PC-9 (cell line): ENCODE measurements at regions of chr6 and their contacts with region 1.

Region 1: DNA sequence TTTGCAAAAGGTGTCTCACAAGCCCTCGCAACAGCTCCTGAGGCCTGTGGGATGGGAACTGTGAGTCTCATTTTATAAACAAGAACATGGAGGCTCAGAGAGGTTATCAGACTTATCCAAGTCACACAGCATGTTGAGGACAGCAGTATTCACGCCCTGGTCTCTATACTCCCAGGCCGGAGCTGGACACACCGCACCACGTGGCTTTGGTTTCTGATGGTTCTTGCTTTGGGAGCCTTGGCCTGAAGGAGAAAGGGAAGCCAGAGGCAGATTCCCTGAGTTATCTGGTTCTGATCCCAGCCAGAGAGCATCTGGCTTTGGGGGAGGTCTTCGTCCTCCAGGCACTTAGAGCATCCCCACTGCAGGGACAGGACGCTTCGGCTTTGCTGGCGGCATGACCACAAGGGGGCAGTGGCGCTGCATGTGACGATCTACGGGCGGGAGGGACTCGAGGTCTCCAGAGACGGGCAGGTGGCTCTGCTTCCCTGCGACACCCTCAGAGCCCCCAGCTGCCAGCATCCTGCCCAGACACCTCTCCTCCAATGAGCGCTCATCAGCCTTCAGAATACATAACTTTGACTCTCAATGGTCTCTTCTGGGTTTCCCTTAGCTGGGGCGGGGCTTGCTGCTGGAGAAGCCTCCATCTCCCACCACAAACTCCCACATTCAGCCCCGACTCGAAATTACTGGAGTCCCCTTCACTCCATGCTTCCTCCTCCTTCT is 51.4 kb upstream of the SAYSD1 start:
- DNase-seq: peak; percentile 64 to 80
- H3K4me3 ChIP-seq: no peak overlapping the region
- H3K27ac ChIP-seq: no peak overlapping the region
- H3K4me1 ChIP-seq: peaks cover 32% of the 10 kb centered on the region
- H3K27me3 ChIP-seq: no peaks in the 10 kb centered on the region
- CTCF ChIP-seq: peak; percentile 93

Region 2: DNA sequence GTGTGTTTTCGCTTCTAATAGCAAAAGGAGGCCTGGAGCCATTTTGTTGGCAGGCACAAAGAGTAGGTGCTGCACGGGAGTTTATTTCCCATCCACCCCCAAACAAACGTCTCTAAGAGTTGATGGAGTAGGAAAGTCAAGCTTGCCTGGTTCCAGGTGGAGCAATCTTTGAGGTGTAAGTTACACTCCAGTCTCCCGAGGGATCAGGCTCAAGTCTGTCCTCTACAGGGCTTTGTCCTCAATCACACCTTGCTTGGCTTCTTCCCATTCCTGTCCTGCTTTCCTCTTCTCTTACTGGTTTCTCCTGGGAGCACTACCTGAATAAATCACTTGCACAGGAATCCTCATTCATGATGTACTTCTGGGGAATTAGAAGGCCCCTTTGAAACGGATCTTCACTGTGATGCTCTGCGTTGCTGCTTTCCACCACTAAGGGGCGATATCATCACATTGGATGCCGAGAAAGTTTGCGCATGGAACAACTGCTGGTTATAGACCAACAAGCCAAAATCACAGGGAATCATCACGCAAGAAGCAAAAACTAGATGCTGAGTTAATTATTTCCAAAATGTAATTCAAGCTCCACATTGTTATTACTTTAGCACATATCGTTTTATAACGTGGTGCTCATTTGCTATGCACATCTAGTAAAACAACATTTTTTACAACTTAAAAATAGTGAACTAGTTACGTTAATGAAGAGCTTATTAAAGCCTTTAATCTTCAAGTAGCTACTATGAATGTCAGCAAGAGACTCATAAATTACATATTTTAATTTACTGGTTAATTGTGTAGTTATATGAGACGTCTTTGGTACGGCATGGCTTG is 294.4 kb before region 1 on chr6:
- CTCF ChIA-PET with region 1: no interaction called
- POLR2A ChIA-PET with region 1: no interaction called
- intact Hi-C with region 1: loop called (anchors 5 kb)
- DNase-seq: peak in 1 of 2 experiments; percentile 45
- H3K4me3 ChIP-seq: no peak overlapping the region
- H3K27ac ChIP-seq: no peak overlapping the region
- H3K4me1 ChIP-seq: no peaks in the 10 kb centered on the region
- H3K27me3 ChIP-seq: no peaks in the 10 kb centered on the region
- CTCF ChIP-seq: peak; percentile 87

Region 3: DNA sequence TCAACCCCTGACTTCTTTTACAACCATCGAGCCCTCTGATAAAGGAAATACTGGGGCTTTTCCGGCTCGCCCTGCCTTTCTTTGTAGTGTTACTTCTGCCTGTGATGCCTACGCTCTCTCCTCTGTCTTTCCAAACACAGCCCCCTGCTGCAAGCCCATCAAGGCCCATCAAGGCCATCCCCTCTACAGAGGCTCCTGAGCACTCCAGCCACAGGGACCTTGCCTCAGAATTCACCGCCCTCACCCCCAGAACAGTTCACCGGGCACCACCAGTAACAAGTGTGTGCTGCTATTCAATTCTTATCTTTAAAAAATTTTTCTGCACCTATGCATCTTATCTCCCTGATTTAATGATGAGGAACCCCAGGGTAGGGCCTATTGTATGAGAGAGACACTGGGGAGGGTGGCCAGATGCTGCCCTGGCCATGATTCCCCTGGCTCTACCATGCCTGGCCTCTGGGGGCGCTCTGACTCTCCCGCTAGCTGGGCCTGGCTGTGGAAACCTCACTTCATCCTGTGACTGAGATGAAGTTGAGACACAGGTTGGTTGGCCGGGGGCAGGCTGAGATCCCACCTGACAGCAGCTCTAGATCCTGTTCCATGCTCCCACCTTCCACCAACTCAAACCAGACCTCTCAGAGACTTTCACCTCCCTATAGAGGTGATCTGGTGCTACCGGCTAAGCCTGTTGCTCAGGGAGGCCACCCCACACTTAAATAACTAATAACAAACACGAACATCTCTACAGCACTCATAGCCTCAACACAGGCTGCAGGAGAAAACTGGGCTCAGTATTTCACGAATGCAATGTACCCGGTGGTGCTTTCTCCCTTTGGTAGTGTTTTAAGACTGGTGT is 137.0 kb before region 1 on chr6:
- CTCF ChIA-PET with region 1: no interaction called
- POLR2A ChIA-PET with region 1: no interaction called
- intact Hi-C with region 1: loop called (anchors 1 kb)
- DNase-seq: peak in 1 of 2 experiments; percentile 26
- H3K4me3 ChIP-seq: no peak overlapping the region
- H3K27ac ChIP-seq: no peak overlapping the region
- H3K4me1 ChIP-seq: no peaks in the 10 kb centered on the region
- H3K27me3 ChIP-seq: peaks cover 85% of the 10 kb centered on the region
- CTCF ChIP-seq: peak; percentile 84

Region 4: GRCh38 chr6:39203852-39204375 is 37.6 kb after region 1 on chr6:
- CTCF ChIA-PET with region 1: interaction called, 3 read pairs
- POLR2A ChIA-PET with region 1: interaction called, 4 read pairs
- intact Hi-C with region 1: loop called (anchors 1 kb)
- DNase-seq: peak; percentile 97 to 98
- H3K4me3 ChIP-seq: peak overlapping the region; percentile 16; the same call in 1 of the 2 replicates
- H3K27ac ChIP-seq: peak overlapping the region; percentile 95
- H3K4me1 ChIP-seq: peaks cover 96% of the 10 kb centered on the region
- H3K27me3 ChIP-seq: no peaks in the 10 kb centered on the region
- CTCF ChIP-seq: no peak

Region 5: GRCh38 chr6:39228992-39229767 is 62.8 kb after region 1 on chr6 and contains the start of gene KCNK5:
- CTCF ChIA-PET with region 1: no interaction called
- POLR2A ChIA-PET with region 1: no interaction called
- intact Hi-C with region 1: loop called (anchors 1 kb)
- DNase-seq: peak; percentile 73 to 89
- H3K4me3 ChIP-seq: peak within 1 kb of the TSS; percentile 96
- H3K27ac ChIP-seq: peak within 1 kb of the TSS; percentile 34; the same call in 1 of the 2 replicates
- H3K4me1 ChIP-seq: peaks cover 39% of the 10 kb centered on the region
- H3K27me3 ChIP-seq: no peaks in the 10 kb centered on the region
- CTCF ChIP-seq: peak; percentile 86
- total RNA-seq, gene KCNK5: 11.9 and 14.3 TPM in 2 replicates

Region 6: DNA sequence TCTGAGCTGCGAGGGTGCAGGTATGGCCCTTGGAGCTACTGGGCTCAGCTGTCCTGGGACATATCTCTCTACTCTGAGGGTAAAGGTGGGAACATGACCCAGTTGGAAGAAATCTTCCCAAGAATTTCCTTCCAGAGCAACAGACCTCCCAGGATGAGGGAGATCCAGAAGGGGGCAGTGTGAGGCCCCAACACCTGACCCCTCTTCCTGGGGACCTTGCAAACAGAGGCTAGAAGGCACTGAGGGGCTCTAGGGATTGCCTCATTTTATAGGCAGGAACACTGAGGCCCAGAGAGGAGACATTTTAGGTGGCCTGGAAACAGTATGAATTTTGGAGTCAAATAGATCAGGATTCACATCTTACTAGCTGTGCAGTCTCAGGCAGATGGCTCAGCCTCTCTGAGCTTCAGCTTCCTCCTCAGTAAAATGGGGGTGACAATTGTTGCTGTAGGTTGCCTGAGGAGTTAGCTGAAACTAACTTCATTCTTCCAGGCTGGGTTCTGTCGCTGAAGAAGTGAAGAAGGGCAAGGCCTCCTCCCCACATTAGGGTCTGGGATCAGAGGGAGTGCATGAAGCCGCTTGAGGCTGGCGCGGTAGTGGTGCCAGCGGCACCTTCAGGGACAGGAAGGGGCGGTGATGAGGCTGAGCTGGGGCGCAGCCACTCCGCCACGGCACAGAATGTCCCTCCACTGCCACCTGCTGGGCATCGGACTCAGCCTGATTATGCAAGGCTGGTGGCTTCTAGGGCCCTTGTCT is 136.5 kb after region 1 on chr6:
- CTCF ChIA-PET with region 1: interaction called, 4 read pairs
- POLR2A ChIA-PET with region 1: interaction called, 5 read pairs
- intact Hi-C with region 1: loop called (anchors 1 kb)
- DNase-seq: peak; percentile 56 to 82
- H3K4me3 ChIP-seq: peak overlapping the region; percentile 32; the same call in 1 of the 2 replicates
- H3K27ac ChIP-seq: no peak overlapping the region
- H3K4me1 ChIP-seq: peaks cover 12% of the 10 kb centered on the region
- H3K27me3 ChIP-seq: no peaks in the 10 kb centered on the region
- CTCF ChIP-seq: peak; percentile 92